GM18951 (cell line): ENCODE measurements at regions of chr3 and their contacts with region 1.

Region 1: DNA sequence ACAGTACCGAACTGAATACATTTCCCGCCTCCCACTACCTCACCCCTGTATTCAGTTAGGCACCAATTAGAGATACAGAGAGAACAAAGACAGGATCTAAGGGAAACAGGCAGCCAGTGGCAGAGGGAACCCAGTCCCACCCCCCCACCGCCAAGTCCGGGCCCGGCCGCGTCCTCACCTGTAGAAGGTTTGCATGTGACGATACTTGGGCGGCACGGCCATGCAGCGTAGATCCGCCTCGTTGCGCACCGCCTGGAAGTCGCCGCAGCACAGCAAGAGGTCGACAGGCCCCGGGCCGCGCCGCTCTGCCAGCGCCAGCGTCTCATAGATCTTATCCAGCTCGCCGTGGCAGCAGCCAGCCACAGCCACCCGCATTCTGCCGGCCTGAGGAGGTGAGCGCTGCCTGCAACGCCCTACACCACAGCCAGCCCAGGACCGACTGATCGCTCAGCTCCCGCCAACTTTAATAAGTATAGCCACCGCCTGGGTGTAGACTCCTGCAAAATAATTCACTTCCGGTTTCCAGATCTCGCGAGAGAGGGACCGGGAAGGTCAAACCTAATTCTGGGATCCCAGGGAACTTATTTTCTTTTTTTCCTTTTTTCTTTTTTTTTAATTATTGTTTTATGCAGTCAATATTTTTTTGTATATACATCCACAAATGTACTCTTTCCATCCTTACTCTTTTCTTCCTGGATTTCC is at the start of gene DBR1:
- POLR2A ChIP-seq: peak; percentile 96

Region 2: GRCh38 chr3:137988152-137988551 is 186.4 kb before region 1 on chr3:
- in situ Hi-C with region 1: no loop called
- POLR2A ChIP-seq: no peak

Region 3: DNA sequence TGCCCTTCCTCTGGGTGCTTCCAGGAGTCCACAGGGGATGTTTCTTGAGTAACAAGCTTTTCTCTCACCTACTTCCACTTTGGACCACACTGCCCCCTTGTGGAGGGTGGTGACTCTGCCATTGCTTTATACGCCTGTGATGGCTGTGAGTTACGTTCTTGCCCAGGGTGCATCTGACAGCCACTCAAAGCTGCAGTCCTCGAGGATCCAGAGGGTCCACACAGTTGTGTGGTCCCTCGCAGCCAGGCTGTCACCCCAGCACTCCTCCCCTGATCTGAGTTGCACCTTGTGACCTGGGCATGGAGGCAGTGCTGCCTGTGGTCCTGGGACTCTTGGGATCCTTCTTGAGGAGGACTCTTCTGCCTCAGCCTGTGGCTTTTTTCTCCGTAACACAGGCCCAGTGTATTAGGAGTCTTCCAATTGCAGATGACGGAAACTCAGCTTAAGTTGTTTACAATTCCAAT is 749.0 kb after region 1 on chr3:
- in situ Hi-C with region 1: loop called (anchors 10 kb)
- POLR2A ChIP-seq: no peak